SK-N-SH (cell line): ENCODE measurements at regions of chr7 and their contacts with region 1.

Region 1: GRCh38 chr7:120805636-120806388 is 52.1 kb downstream of the TSPAN12 start:
- DNase-seq: peak; percentile 59
- H3K4me3 ChIP-seq: no peak overlapping the region; a peak in 1 of 4 replicates
- H3K27ac ChIP-seq: no peak overlapping the region
- H3K4me1 ChIP-seq: no peaks in the 10 kb centered on the region
- H3K27me3 ChIP-seq: peaks cover 9% of the 10 kb centered on the region; the same call in 1 of the 2 replicates
- CTCF ChIP-seq: peak; percentile 99
- EP300 ChIP-seq: no peak
- RAD21 ChIP-seq: peak; percentile 83

Region 2: GRCh38 chr7:120792091-120792860 is 13.5 kb before region 1 on chr7:
- CTCF ChIA-PET with region 1: interaction called, 106 read pairs
- POLR2A ChIA-PET with region 1: no interaction called
- DNase-seq: peak; percentile 73
- H3K4me3 ChIP-seq: no peak overlapping the region; a peak in 1 of 4 replicates
- H3K27ac ChIP-seq: no peak overlapping the region
- H3K4me1 ChIP-seq: peaks cover 0 to 2% of the 10 kb centered on the region in 2 experiments; a peak in 1 of 4 replicates
- H3K27me3 ChIP-seq: peaks cover 15% of the 10 kb centered on the region; the same call in 1 of the 2 replicates
- CTCF ChIP-seq: peak; percentile 99
- EP300 ChIP-seq: no peak
- RAD21 ChIP-seq: peak; percentile 75

Region 3: GRCh38 chr7:120825576-120825975 is 19.8 kb after region 1 on chr7:
- CTCF ChIA-PET with region 1: interaction called, 24 read pairs
- POLR2A ChIA-PET with region 1: no interaction called
- DNase-seq: no peak
- H3K4me3 ChIP-seq: no peak overlapping the region
- H3K27ac ChIP-seq: no peak overlapping the region
- H3K4me1 ChIP-seq: no peaks in the 10 kb centered on the region
- H3K27me3 ChIP-seq: peaks cover 6% of the 10 kb centered on the region; the same call in 1 of the 2 replicates
- CTCF ChIP-seq: no peak
- EP300 ChIP-seq: no peak
- RAD21 ChIP-seq: no peak

Region 4: DNA sequence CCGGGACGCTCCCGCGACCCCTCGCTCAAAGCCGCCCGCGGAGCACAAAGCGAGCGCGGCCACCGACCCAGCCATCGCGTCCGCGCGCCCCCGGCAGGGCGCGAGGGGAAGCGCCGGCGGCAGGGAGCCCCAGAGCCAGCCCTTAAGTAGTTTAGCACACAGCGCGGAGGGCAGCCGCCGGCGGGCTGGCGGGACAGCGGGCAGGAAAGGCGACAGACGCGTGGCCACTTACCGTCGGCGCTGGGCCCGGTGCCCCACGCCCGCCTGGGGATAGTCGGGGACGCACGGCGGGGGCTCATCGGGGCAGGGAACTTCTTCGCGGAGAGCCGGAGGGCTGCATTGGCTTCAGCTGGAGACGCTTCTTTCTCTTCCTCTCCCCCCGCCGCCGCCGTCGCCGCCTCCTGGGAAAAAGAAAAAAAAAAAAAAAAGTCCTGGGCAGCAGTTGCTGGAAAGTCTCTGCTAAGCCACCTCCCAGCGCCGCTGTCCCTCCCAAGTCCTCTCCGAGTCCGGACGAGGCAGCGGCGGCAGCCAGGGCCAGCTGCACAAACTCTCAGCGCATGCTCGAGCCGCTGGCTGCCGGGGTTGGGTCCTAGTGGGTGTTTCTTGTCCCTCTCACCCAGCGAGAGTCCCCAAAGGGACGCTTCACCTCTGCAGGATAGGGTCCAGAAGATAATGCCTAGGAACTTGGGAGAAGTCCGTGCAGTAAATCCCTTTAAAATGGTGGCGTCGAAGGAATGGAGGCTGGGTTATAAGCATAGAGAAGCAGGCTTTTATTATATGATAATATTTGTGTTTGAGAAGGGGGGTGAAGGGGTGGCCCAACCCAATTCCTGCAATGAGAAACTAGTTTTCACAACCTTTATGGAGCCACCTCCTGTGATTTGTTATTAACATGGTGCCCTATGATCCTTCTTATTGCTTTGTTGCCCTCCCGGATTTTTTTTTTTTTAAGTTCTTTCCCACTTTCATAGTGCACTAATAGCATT is 52.1 kb after region 1 on chr7 and contains the start of gene TSPAN12:
- CTCF ChIA-PET with region 1: interaction called, 16 read pairs
- POLR2A ChIA-PET with region 1: no interaction called
- DNase-seq: peak; percentile 91
- H3K4me3 ChIP-seq: peak within 1 kb of the TSS; percentile 64 to 66
- H3K27ac ChIP-seq: peak within 1 kb of the TSS in 1 of 2 experiments; percentile 15; a peak in 1 of 4 replicates
- H3K4me1 ChIP-seq: peaks cover 0 to 11% of the 10 kb centered on the region in 2 experiments; a peak in 2 of 4 replicates
- H3K27me3 ChIP-seq: peaks cover 35% of the 10 kb centered on the region
- CTCF ChIP-seq: peak; percentile 64
- EP300 ChIP-seq: no peak
- RAD21 ChIP-seq: peak; percentile 19; the same call in 1 of the 2 replicates
- polyA plus RNA-seq, gene TSPAN12: 0.21 TPM in 1 of 2 replicates, not detected in the other

Region 5: DNA sequence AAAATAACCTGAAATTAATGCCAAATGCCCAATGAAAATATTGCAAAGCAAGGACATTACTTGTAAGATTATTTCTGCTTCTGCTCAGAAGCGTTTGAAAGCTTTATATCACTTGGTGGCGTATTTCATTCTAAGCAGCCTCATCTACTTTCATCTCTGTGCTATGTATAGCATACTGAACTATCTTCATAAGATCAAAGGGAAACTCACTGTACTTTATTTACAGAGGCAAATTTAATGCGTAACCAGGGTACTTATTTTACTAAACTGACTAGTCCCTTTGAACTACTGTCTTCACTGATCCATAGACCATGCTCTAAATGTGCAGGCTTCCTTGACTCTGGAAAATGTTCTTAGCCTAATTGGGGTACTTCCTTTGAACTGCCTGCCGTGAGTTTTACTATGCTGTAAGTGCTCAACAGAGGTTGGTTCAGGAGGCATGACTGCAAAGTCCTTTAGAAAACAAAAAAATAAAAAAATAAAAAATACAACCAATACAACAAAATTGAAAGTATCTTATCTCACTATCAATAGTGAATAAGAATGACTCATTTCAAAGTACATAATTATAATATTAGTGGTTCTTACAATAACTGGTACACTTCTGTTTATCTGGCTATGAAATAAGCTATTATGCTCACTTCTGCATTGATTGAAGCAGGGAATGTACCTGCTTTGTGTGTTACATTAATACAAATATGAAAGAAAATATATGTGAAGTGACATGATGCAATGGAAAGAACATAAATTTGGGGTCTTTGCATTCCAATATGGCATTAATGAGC is 93.1 kb after region 1 on chr7:
- CTCF ChIA-PET with region 1: interaction called, 11 read pairs
- POLR2A ChIA-PET with region 1: no interaction called
- DNase-seq: no peak
- H3K4me3 ChIP-seq: no peak overlapping the region
- H3K27ac ChIP-seq: no peak overlapping the region
- H3K4me1 ChIP-seq: no peaks in the 10 kb centered on the region
- H3K27me3 ChIP-seq: no peaks in the 10 kb centered on the region; the same call in 1 of the 2 replicates
- CTCF ChIP-seq: no peak
- EP300 ChIP-seq: no peak
- RAD21 ChIP-seq: no peak

Region 6: GRCh38 chr7:121041516-121042148 is 235.8 kb after region 1 on chr7:
- CTCF ChIA-PET with region 1: no interaction called
- POLR2A ChIA-PET with region 1: no interaction called
- DNase-seq: peak; percentile 44
- H3K4me3 ChIP-seq: peak overlapping the region in 1 of 2 experiments; percentile 14; a peak in 2 of 4 replicates
- H3K27ac ChIP-seq: peak overlapping the region; percentile 72 to 84
- H3K4me1 ChIP-seq: peaks cover 0 to 12% of the 10 kb centered on the region in 2 experiments; a peak in 2 of 4 replicates
- H3K27me3 ChIP-seq: no peaks in the 10 kb centered on the region
- CTCF ChIP-seq: no peak
- EP300 ChIP-seq: peak; percentile 83 to 94
- RAD21 ChIP-seq: peak; percentile 17; the same call in 1 of the 2 replicates

Region 7: GRCh38 chr7:121081327-121081936 is 275.6 kb after region 1 on chr7:
- CTCF ChIA-PET with region 1: interaction called, 28 read pairs
- POLR2A ChIA-PET with region 1: no interaction called
- DNase-seq: peak; percentile 45
- H3K4me3 ChIP-seq: no peak overlapping the region
- H3K27ac ChIP-seq: no peak overlapping the region
- H3K4me1 ChIP-seq: peaks cover 6 to 33% of the 10 kb centered on the region in 2 experiments
- H3K27me3 ChIP-seq: no peaks in the 10 kb centered on the region
- CTCF ChIP-seq: peak; percentile 91
- EP300 ChIP-seq: no peak
- RAD21 ChIP-seq: peak; percentile 95

Region 8: DNA sequence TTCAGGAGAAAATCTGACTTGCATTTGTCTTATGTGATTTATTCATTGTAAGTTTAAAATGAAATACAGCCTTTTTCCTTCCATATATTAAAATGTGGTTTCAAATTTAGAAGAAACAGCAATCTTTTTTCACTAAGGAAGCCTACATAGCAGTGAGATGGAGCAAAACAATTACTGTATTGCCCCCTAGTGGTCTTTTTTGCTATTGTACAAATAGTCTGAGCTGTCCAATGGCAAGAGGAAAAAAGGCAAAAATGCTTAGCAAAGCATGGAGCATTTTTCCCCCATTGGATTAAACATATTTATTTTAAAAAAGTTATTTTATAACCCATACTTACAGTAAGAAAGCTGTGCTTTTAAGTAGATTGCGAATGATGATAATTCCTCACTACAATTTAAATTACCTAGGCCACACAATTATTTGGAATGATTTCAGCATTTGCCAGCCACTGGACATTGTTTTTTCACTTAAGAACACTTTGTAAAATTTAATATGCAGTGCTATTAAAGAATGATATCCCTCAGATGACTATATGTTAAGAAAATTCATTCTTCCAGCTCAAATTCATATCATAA is 302.2 kb after region 1 on chr7:
- CTCF ChIA-PET with region 1: interaction called, 58 read pairs
- POLR2A ChIA-PET with region 1: no interaction called
- DNase-seq: peak; percentile 45
- H3K4me3 ChIP-seq: no peak overlapping the region
- H3K27ac ChIP-seq: no peak overlapping the region
- H3K4me1 ChIP-seq: no peaks in the 10 kb centered on the region
- H3K27me3 ChIP-seq: no peaks in the 10 kb centered on the region
- CTCF ChIP-seq: peak; percentile 99
- EP300 ChIP-seq: no peak
- RAD21 ChIP-seq: peak; percentile 95